WTC11 (cell line): ENCODE measurements at regions of chr4 and their contacts with region 1.

Region 1: DNA sequence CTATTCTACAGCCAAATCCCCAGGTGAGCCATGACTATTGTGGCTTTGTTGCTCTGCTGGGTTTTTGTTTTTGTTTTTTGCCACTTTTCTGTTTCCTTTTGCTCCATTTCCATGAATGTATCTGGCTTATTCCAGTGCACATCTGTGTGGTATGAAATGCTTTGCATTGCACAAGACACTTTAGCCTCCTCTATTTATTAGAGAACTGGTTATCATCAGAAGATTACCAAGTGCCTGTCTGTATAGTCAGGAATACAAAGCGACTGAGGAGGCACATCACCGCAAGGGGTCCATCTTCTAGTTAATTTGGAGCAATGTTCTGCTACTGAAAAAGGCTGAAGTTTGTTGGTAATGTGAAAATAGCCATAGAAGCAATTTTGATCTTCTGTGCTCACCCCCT is 120.8 kb downstream of the DCLK2 start:
- DNase-seq: no peak
- ATAC-seq: no peak
- H3K4me3 Mint-ChIP-seq: no peak overlapping the region
- H3K27ac Mint-ChIP-seq: no peak overlapping the region
- H3K4me1 Mint-ChIP-seq: 0 out of 2 replicates have a peak, but pooled peaks cover 2% of the 10 kb centered on the region
- H3K27me3 Mint-ChIP-seq: peaks cover 83% of the 10 kb centered on the region
- CTCF ChIP-seq: no peak

Region 2: GRCh38 chr4:149781150-149781549 is 417.9 kb before region 1 on chr4:
- CTCF ChIA-PET with region 1: no interaction called
- POLR2A ChIA-PET with region 1: no interaction called
- DNase-seq: no peak
- ATAC-seq: no peak
- H3K4me3 Mint-ChIP-seq: no peak overlapping the region
- H3K27ac Mint-ChIP-seq: no peak overlapping the region
- H3K4me1 Mint-ChIP-seq: peaks cover 3% of the 10 kb centered on the region
- H3K27me3 Mint-ChIP-seq: no peaks in the 10 kb centered on the region
- CTCF ChIP-seq: no peak

Region 3: DNA sequence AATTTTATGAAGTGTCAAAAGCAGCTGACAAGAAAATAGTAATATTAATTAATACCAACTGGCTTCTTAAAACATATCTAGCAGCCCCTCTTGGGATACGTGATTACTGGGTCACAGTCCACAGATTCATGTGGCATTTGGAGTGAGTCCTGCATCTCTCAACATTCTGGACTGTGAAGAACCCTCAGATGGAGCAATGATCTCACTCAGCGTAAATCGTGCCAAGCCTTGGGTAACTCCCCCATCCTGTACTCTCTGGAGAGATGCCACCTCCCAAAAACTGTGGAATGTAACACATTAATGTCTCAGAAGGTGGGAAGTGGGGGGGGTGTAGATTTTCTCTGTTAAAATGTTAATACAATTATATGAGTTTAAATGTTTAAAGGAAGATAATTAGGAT is 265.2 kb before region 1 on chr4:
- CTCF ChIA-PET with region 1: no interaction called
- POLR2A ChIA-PET with region 1: no interaction called
- DNase-seq: no peak
- ATAC-seq: no peak
- H3K4me3 Mint-ChIP-seq: no peak overlapping the region
- H3K27ac Mint-ChIP-seq: no peak overlapping the region
- H3K4me1 Mint-ChIP-seq: no peaks in the 10 kb centered on the region
- H3K27me3 Mint-ChIP-seq: no peaks in the 10 kb centered on the region
- CTCF ChIP-seq: no peak

Region 4: DNA sequence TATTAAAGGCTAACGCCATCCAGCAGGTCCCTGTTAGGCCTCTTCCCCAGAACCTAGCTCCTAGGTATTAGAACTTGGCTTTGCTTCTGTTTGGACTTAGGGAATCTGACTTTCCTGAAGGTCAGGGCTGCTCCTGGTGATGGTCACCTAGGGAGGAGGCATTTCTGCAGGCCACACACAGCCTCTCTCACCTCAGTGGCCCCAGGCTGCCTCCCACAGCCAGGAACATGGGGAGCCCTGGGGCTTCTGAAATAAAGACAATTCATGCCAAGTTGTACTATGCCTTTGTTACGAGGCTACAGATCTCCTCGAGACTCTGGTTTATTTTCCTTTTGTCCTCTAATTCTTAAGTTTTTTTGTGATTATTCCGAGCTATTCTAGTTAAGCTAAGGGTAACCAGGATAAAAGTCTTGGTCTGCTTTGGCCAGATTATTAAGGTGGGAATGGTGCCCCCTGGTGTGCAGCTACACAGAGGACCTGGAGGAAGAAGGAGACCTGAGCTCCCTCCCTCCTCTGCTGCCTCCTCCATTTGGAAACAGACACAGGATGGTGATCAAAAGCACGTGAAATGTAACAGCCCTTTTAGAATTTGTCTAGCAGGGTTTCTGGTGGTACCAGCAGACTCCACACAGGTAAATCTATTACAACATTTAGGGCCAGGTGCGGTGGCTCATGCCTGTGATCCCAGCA is 10.2 kb after region 1 on chr4:
- CTCF ChIA-PET with region 1: interaction called, 13 read pairs
- POLR2A ChIA-PET with region 1: no interaction called
- DNase-seq: peak; percentile 71
- ATAC-seq: peak; percentile 84
- H3K4me3 Mint-ChIP-seq: no peak overlapping the region
- H3K27ac Mint-ChIP-seq: no peak overlapping the region
- H3K4me1 Mint-ChIP-seq: no peaks in the 10 kb centered on the region
- H3K27me3 Mint-ChIP-seq: no peaks in the 10 kb centered on the region
- CTCF ChIP-seq: no peak